Activated CD4-positive, alpha-beta T cell treated with anti-CD3 and anti-CD28 coated beads for 36 hours (primary cell): ENCODE measurements at regions of chr19 and their contacts with region 1.

Region 1: DNA sequence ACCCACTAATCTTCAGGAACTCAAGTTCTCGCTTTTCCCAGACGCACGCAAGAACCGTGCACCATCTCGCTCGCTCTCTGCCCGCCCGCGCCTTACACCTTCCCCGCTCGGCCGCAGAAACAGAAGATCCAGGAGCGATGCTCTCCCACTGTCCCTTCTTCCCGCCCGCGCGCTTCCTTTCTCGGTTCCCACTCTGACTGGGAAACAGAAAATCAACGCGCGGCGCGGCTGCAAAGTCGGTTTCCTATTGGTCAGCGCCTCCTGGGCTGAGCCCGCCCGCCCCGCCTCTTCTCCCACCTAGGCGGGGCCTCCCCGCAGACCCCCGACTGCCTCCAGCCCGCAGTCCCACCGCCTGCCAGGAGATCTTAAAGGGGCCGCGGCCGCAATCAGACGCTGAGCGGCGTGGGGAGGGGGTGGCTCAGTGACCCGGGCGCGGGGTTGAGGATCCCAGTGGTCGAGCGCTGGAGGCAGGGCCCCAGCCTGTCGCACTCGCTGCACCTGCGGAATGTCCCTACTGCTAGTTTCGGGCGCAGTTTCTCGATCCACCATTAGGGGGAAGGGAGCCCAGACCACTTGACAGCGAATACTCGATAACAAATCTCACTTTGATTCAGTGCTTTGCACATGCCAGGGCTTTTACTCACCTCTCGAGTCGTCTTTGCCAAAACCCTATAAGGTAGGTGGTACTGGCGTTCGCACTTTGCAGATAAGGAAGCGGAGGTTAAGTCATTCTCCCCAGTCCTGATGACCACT is 685 bp upstream of the SLC25A23 start:
- DNase-seq: peak; percentile 99
- ATAC-seq: peak; percentile 83
- H3K4me3 Mint-ChIP-seq: peak overlapping the region; percentile 78
- H3K27ac Mint-ChIP-seq: peak overlapping the region; percentile 82
- H3K4me1 Mint-ChIP-seq: peaks cover 18% of the 10 kb centered on the region
- H3K27me3 Mint-ChIP-seq: no peaks in the 10 kb centered on the region

Region 2: GRCh38 chr19:5827891-5828660 is 632.2 kb before region 1 on chr19:
- CTCF ChIA-PET with region 1: no interaction called
- POLR2A ChIA-PET with region 1: no interaction called
- intact Hi-C with region 1: loop called in 1 of 2 experiments (anchors 5 kb)
- DNase-seq: peak; percentile 98
- ATAC-seq: peak; percentile 84
- H3K4me3 Mint-ChIP-seq: peak overlapping the region; percentile 92
- H3K27ac Mint-ChIP-seq: peak overlapping the region; percentile 96
- H3K4me1 Mint-ChIP-seq: peaks cover 4% of the 10 kb centered on the region
- H3K27me3 Mint-ChIP-seq: no peaks in the 10 kb centered on the region

Region 3: DNA sequence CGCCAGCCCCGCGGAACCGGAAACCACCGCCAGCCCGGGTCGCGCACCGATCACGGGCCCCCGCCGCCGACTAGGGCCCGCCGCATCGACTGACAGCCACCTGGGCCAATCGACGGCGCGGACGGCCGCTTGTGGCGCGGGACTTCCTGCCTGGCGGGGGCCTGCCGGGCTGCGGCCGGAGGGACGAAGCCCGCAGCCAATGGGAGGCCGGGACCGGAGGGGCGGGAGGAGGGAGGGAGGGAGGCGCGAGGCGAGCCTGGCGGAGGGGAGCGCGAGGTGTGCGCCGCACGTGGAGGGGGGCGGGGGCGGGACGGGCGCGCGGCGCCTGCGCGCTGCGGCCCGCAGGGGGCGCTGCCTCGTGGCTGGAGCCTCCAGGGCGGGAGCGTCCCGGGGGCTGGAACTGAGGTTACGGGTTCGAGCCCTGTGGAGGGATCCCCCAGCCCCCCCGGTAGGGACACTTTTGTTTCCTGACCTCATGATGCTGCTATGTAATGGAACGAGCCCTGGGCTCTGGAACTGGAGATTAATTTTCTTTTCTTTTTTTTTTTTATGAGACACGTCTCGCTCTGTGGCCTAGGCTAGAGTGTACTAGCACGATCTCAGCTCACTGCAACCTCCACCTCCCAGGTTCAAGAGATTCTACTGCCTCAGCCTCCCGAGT is 180.2 kb before region 1 on chr19 and contains the start of gene MLLT1:
- CTCF ChIA-PET with region 1: no interaction called
- POLR2A ChIA-PET with region 1: no interaction called
- intact Hi-C with region 1: loop called in 1 of 2 experiments (anchors 1 kb)
- DNase-seq: peak; percentile 98
- ATAC-seq: peak; percentile 98
- H3K4me3 Mint-ChIP-seq: peak within 1 kb of the TSS; percentile 98
- H3K27ac Mint-ChIP-seq: peak within 1 kb of the TSS; percentile 93
- H3K4me1 Mint-ChIP-seq: peaks cover 38% of the 10 kb centered on the region
- H3K27me3 Mint-ChIP-seq: peaks cover 2% of the 10 kb centered on the region
- total RNA-seq, gene MLLT1: 45.0 to 46.6 TPM

Region 4: GRCh38 chr19:6424939-6425731 is 35.1 kb before region 1 on chr19:
- CTCF ChIA-PET with region 1: no interaction called
- POLR2A ChIA-PET with region 1: no interaction called
- intact Hi-C with region 1: loop called (anchors 1 kb)
- DNase-seq: peak; percentile 100
- ATAC-seq: peak; percentile 88
- H3K4me3 Mint-ChIP-seq: peak overlapping the region; percentile 73
- H3K27ac Mint-ChIP-seq: peak overlapping the region; percentile 98
- H3K4me1 Mint-ChIP-seq: peaks cover 31% of the 10 kb centered on the region
- H3K27me3 Mint-ChIP-seq: no peaks in the 10 kb centered on the region

Region 5: GRCh38 chr19:6501740-6502648 is 41.7 kb after region 1 on chr19 and contains the start of gene TUBB4A:
- CTCF ChIA-PET with region 1: no interaction called
- POLR2A ChIA-PET with region 1: no interaction called
- intact Hi-C with region 1: loop called (anchors 1 to 5 kb)
- DNase-seq: peak; percentile 70
- ATAC-seq: peak; percentile 49
- H3K4me3 Mint-ChIP-seq: peak within 1 kb of the TSS; percentile 68
- H3K27ac Mint-ChIP-seq: no peak within 1 kb of the TSS
- H3K4me1 Mint-ChIP-seq: peaks cover 7% of the 10 kb centered on the region
- H3K27me3 Mint-ChIP-seq: peaks cover 7% of the 10 kb centered on the region
- total RNA-seq, gene TUBB4A: 4.8 to 5.1 TPM

Region 6: DNA sequence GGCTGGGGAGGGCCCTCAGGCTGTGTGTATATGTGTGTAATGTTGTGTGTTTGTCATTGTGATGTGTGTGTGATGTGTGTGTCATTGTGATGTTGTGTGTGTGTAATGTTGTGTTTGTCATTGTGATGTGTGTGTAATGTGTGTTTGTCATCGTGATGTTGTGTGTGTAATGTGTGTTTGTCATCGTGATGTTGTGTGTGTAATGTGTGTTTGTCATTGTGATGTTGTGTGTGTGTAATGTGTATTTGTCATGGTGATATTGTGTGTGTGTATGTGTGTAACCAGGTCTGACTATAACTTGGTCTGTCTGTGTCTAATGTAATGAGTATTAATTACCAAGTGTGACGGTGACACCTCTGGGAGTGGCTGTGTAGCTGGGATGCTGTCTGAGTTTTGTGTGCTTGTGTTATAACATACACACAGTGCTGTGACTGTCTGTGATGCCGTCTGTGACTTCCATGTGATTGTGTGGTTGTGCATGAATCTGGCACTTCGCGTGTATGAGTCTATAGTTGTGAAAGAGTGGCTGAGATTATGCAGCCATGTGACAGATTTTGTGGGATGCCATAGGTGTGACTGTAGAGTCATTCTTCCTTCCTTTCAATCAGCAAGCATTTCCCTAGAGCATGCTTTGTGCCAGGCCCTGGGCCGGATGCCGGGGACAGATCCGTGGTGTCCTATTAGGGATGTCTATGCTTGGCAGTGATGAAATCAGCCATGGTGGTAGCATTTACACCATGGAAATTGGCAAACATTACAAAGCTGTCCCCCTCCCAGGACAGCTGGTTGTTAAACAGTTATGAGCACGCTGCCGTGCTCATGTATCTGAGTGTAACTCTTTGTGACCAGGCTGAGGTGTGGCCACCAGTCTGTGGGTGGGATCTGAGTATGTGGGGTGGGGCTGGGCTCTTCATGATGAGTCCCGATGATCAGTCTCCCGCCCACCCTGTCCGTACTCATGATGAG is 203.2 kb after region 1 on chr19:
- CTCF ChIA-PET with region 1: no interaction called
- POLR2A ChIA-PET with region 1: no interaction called
- intact Hi-C with region 1: loop called in 1 of 2 experiments (anchors 2 kb)
- DNase-seq: peak; percentile 70
- ATAC-seq: peak; percentile 40
- H3K4me3 Mint-ChIP-seq: no peak overlapping the region
- H3K27ac Mint-ChIP-seq: no peak overlapping the region
- H3K4me1 Mint-ChIP-seq: peaks cover 19% of the 10 kb centered on the region
- H3K27me3 Mint-ChIP-seq: no peaks in the 10 kb centered on the region

Region 7: GRCh38 chr19:6773323-6773931 is 313.1 kb after region 1 on chr19:
- CTCF ChIA-PET with region 1: no interaction called
- POLR2A ChIA-PET with region 1: no interaction called
- intact Hi-C with region 1: loop called in 1 of 2 experiments (anchors 1 kb)
- DNase-seq: peak; percentile 84
- ATAC-seq: peak; percentile 50
- H3K4me3 Mint-ChIP-seq: peak overlapping the region; percentile 97
- H3K27ac Mint-ChIP-seq: peak overlapping the region; percentile 98
- H3K4me1 Mint-ChIP-seq: peaks cover 54% of the 10 kb centered on the region
- H3K27me3 Mint-ChIP-seq: no peaks in the 10 kb centered on the region